ENCODE measurements at regions of chr6 and their contacts with region 1.

Region 1: GRCh38 chr6:55239099-55239498 is 64.8 kb downstream of the HCRTR2 start:
- DNase-seq: no peak
- H3K4me3 ChIP-seq: no peak overlapping the region
- H3K27ac ChIP-seq: no peak overlapping the region
- H3K4me1 ChIP-seq: no peaks in the 10 kb centered on the region
- H3K27me3 ChIP-seq: no peaks in the 10 kb centered on the region
- CTCF ChIP-seq: no peak

Region 2: GRCh38 chr6:53979468-53980067 is 1259.5 kb before region 1 on chr6:
- intact Hi-C with region 1: loop called (anchors 5 kb)
- DNase-seq: no peak
- H3K4me3 ChIP-seq: no peak overlapping the region
- H3K27ac ChIP-seq: no peak overlapping the region
- H3K4me1 ChIP-seq: no peaks in the 10 kb centered on the region
- H3K27me3 ChIP-seq: no peaks in the 10 kb centered on the region
- CTCF ChIP-seq: peak; percentile 76

Region 3: DNA sequence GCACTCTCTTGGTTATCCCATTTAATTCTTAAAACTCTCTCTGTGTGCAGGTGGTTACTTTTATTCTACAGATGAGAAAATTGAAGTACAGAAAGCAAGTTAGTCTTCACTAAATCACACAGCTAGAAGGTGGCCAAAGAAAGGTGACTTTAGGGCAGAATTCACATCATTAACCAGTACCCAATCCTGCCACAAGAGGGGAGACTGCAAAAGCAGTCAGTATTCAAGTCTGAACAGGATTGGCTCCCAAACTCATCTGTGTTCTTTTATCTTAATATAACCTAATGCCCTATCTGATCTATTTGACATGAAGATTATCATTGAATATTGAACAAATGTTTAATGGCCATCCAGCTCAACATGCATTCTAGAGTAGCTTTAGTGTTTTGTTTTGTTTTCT is 617.8 kb before region 1 on chr6:
- intact Hi-C with region 1: loop called (anchors 10 kb)
- DNase-seq: no peak
- H3K4me3 ChIP-seq: no peak overlapping the region
- H3K27ac ChIP-seq: no peak overlapping the region
- H3K4me1 ChIP-seq: no peaks in the 10 kb centered on the region
- H3K27me3 ChIP-seq: no peaks in the 10 kb centered on the region
- CTCF ChIP-seq: no peak

Measured in colonic mucosa (tissue), 4 donors.